HepG2 (cell line): ENCODE measurements at regions of chr12 and their contacts with region 1.

Region 1: GRCh38 chr12:101759396-101760047 is 20.3 kb upstream of the SYCP3 start:
- DNase-seq: peak; percentile 39
- ATAC-seq: peak; percentile 76
- H3K4me3 ChIP-seq: no peak overlapping the region
- H3K27ac ChIP-seq: no peak overlapping the region
- H3K4me1 ChIP-seq: no peaks in the 10 kb centered on the region
- H3K27me3 ChIP-seq: no peaks in the 10 kb centered on the region
- CTCF ChIP-seq: peak; percentile 59
- EP300 ChIP-seq: no peak
- POLR2A ChIP-seq: no peak
- RAD21 ChIP-seq: peak; percentile 40; the same call in 1 of the 2 replicates

Region 2: DNA sequence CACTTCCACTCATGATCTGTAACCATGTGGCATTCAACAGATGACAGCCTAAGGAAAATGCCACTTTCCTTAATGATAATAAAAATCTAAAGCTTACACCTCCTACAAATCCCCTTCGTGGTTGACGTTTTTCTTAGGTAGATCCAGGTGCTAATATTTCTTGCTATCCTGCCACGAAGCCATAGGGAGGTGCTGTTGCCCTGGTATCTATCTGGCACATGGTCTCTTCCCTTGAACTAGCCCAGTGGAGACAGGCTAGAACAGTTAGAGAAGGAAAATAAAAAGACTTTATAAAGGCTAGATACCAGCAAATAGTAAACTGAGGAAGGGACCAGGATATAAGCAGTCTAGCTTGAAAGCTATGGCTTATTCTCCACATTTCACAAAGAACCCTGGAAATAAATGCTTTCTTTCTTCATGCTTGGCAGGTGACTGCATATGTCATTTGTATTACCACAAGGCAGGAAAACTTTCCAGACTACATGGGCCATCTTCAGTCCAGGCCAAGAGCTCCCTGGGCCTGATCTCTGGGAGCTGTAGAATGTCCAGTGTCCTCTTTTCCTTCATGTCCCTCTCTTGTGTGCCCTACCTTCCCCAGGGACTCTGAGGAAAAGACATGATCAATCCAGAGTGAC is 269.1 kb before region 1 on chr12:
- CTCF ChIA-PET with region 1: no interaction called
- POLR2A ChIA-PET with region 1: no interaction called
- in situ Hi-C with region 1: no loop called
- intact Hi-C with region 1: loop called (anchors 5 kb)
- DNase-seq: peak; percentile 61
- ATAC-seq: peak; percentile 93
- H3K4me3 ChIP-seq: no peak overlapping the region
- H3K27ac ChIP-seq: no peak overlapping the region
- H3K4me1 ChIP-seq: peaks cover 10% of the 10 kb centered on the region
- H3K27me3 ChIP-seq: peaks cover 0 to 4% of the 10 kb centered on the region in 2 experiments; a peak in 1 of 5 replicates
- CTCF ChIP-seq: peak; percentile 80
- EP300 ChIP-seq: no peak
- POLR2A ChIP-seq: no peak
- RAD21 ChIP-seq: peak; percentile 70; the same call in 1 of the 2 replicates

Region 3: GRCh38 chr12:101782273-101782731 is 22.8 kb after region 1 on chr12:
- CTCF ChIA-PET with region 1: no interaction called
- POLR2A ChIA-PET with region 1: no interaction called
- in situ Hi-C with region 1: no loop called
- intact Hi-C with region 1: no loop called
- DNase-seq: no peak
- ATAC-seq: no peak
- H3K4me3 ChIP-seq: no peak overlapping the region
- H3K27ac ChIP-seq: no peak overlapping the region
- H3K4me1 ChIP-seq: peaks cover 12% of the 10 kb centered on the region; the same call in 1 of the 2 replicates
- H3K27me3 ChIP-seq: no peaks in the 10 kb centered on the region
- CTCF ChIP-seq: no peak
- EP300 ChIP-seq: no peak
- POLR2A ChIP-seq: no peak
- RAD21 ChIP-seq: no peak